Activated B cell treated with CpG ODN at 0.5 μM for 24 hours (primary cell): ENCODE measurements at regions of chr1 and their contacts with region 1.

Region 1: DNA sequence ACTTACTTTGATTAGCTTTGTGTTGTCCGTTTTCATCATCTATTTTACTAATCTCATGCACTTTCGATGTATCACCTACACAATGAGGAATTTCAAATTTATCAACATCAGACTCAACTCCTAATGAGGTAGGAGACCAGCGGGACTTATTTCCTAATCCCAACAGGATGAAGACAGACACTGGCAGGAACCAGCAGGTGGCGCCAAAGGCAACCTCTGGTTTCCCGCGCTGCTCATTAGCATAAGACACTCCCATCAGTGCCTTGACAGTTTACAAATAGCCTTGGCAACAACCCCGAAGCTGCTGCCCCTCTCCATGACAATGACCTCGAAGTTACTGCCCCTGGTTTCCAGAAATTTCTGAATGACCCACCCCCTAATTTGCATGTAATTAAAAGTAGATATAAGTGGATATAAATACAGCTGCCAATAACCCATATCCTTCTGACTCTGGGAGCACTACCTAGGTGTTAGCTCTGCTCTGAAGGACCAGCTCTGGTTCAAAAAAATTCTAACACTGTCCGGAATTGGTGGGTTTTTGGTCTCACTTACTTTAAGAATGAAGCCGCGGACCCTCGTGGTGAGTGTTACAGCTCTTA is 974.8 kb downstream of the ADGRL2 start:
- DNase-seq: no peak
- ATAC-seq: no peak
- H3K4me3 Mint-ChIP-seq: no peak overlapping the region
- H3K27ac Mint-ChIP-seq: no peak overlapping the region
- H3K4me1 Mint-ChIP-seq: no peaks in the 10 kb centered on the region
- H3K27me3 Mint-ChIP-seq: no peaks in the 10 kb centered on the region
- CTCF ChIP-seq: no peak

Region 2: DNA sequence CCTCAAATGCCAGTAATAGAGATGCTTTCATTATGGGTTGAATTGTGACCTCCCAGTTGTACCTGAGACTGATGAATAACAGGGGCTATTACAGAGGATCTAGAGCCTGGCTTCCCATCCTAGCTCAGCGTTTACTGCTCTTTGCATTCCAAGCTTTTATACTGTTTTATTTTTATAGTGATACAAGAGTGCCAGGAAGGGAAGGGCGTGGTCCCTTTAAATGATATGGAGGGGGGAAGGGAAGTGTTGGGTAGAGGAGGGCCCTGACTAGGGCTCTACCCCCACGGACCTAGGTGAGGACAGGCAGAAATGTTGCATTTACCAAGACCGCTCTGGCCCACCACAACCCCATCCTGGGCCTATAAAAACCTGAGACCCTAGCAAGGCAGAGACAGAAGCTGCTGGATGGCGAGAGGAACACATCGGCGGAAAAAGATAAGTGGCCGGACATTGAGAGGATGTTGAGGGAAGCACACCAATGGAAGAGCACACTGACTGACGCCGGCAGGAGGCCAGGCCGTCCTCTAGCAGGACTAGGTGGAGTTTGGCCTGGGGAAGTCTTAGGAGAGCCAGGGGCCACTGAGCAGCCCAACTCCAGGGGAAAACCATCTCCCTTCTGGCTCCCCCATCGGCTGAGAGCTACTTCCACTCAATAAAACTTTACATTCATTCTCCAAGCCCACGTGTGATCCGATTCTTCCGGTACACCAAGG is 197.5 kb after region 1 on chr1:
- CTCF ChIA-PET with region 1: no interaction called
- POLR2A ChIA-PET with region 1: no interaction called
- intact Hi-C with region 1: no loop called
- DNase-seq: no peak
- ATAC-seq: no peak
- H3K4me3 Mint-ChIP-seq: no peak overlapping the region
- H3K27ac Mint-ChIP-seq: no peak overlapping the region
- H3K4me1 Mint-ChIP-seq: no peaks in the 10 kb centered on the region
- H3K27me3 Mint-ChIP-seq: no peaks in the 10 kb centered on the region
- CTCF ChIP-seq: no peak

Region 3: DNA sequence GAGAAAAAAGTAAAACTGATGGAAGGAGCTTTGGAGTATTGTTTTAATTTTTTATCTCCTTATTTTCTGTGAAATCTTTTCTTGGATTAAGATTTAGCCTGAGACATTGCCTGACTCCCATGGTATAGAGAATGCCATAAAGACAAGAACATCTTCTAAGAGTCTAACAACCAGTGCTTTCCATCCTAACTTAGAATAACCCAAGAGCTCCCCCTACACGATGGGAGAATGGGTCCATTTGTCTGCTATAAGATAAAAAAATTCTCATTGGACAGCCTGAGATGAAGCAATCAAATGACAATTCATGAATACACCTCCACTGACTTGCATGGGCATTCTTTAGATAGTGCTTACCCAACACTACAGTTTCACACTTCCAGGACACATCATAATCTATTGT is 745.3 kb after region 1 on chr1:
- CTCF ChIA-PET with region 1: no interaction called
- POLR2A ChIA-PET with region 1: no interaction called
- intact Hi-C with region 1: loop called (anchors 10 kb)
- DNase-seq: no peak
- ATAC-seq: peak; percentile 40
- H3K4me3 Mint-ChIP-seq: no peak overlapping the region
- H3K27ac Mint-ChIP-seq: no peak overlapping the region
- H3K4me1 Mint-ChIP-seq: no peaks in the 10 kb centered on the region
- H3K27me3 Mint-ChIP-seq: no peaks in the 10 kb centered on the region
- CTCF ChIP-seq: no peak

Region 4: DNA sequence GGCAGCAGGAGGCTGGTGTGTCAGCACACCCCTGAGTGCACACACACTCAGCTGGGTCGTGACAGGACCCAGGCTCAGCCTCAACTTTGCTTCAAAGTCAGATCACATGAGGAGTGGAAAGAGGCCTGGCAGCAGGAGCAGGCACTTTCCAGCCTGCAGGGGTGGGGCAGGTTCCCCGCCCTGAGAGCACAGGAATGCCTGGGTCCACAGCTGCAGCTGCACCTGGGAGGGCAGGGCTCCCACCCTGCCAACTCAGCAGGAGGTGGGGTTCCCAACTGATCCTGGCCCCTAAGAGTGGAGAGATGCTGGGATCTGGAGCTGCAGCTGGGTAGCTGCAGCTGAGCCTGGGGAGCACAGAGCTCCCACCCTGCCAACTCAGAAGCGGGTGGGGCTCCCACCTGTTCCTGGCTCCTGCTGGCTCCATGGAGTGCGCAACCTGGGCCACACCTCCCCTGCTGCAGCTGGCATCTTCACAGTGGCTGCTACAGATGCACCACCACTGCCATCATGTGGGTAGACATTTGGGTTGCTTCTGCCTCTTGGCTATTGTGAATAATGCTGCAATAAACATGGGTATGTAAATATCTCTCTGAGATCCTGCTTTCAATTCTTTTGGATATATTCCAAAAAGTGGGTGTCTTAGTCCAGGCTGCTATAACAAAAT is 808.0 kb after region 1 on chr1:
- CTCF ChIA-PET with region 1: no interaction called
- POLR2A ChIA-PET with region 1: no interaction called
- intact Hi-C with region 1: loop called (anchors 2 kb)
- DNase-seq: no peak
- ATAC-seq: no peak
- H3K4me3 Mint-ChIP-seq: no peak overlapping the region
- H3K27ac Mint-ChIP-seq: no peak overlapping the region
- H3K4me1 Mint-ChIP-seq: peaks cover 2% of the 10 kb centered on the region
- H3K27me3 Mint-ChIP-seq: no peaks in the 10 kb centered on the region
- CTCF ChIP-seq: no peak

Region 5: DNA sequence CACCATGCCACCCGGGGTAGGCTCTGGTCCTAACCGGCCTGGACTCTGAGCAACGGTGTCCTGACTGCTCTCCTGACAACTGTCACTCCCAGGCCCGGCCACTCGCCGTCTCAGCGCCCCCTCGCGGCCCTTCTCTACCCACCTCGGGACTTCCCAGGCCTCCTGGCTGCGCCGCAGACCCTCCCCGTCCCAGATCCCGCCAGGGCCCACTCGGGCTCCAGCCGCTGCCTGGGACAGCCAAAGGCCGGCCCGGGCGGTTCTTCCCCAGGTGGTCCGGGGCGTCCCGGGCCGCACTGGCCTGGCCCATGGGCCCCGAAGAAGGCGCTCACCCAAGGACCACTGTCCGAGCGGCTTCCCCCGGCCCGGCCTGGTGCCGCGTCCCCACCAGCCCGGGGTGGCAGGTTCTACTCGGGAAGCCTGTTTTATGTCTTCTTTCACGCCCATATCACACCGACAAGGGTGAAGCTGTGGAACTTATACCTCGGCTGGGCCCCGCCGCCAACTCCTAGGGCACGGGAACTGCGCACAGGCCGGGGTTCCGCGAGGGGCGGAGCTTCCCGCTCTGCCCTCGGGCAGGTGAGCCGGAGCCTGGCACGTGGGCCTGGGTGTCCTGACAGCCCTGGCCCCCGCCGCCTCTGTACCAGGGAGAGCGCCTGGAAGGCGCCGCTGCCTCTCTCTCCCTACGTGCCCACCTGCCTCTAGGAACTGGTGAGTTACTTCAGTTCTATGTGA is 1085.2 kb after region 1 on chr1:
- CTCF ChIA-PET with region 1: no interaction called
- POLR2A ChIA-PET with region 1: no interaction called
- intact Hi-C with region 1: loop called (anchors 2 kb)
- DNase-seq: peak; percentile 73
- ATAC-seq: peak; percentile 91
- H3K4me3 Mint-ChIP-seq: peak overlapping the region; percentile 79
- H3K27ac Mint-ChIP-seq: peak overlapping the region; percentile 64
- H3K4me1 Mint-ChIP-seq: peaks cover 7% of the 10 kb centered on the region
- H3K27me3 Mint-ChIP-seq: no peaks in the 10 kb centered on the region
- CTCF ChIP-seq: peak; percentile 81